PC-3 (cell line): ENCODE measurements at regions of chr3 and their contacts with region 1.

Region 1: DNA sequence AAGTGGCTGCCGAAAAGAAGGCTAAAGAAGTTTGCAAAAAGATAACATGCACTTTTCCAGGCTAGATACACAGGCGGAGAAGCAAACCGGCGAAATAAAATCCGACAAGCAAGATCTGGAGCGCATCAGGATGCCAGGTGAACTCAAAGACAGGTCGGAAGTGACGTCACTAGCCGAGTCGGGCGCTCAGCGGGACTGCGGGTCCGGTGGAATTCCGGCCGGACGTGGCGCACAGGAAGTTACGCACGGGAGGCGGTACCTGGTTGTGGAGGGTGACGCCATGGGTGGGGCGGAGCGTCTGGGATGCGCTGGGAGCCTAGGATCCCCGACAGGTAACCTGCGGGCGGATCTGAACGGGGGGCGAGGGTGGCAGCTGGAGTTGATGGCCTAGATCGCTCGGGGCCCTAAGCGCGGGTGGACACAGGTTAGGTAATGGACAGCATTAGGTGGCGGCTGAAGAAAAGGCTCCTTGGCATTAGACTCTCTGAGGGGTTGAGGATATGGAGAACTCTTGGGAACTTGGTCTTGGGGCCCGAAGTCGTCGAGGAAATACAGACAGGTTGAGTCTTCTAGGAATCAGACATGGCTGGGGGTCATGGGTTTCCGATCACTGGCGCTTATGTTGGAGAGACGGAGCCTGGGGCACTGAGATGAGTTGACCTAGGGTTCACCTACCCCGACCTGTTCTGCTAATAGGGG is 29.0 kb upstream of the EHHADH start:
- DNase-seq: peak; percentile 98
- ATAC-seq: peak; percentile 99
- H3K4me3 ChIP-seq: peak overlapping the region; percentile 84
- H3K27ac ChIP-seq: peak overlapping the region; percentile 32
- H3K4me1 ChIP-seq: peaks cover 24% of the 10 kb centered on the region
- H3K27me3 ChIP-seq: no peaks in the 10 kb centered on the region
- CTCF ChIP-seq: no peak

Region 2: DNA sequence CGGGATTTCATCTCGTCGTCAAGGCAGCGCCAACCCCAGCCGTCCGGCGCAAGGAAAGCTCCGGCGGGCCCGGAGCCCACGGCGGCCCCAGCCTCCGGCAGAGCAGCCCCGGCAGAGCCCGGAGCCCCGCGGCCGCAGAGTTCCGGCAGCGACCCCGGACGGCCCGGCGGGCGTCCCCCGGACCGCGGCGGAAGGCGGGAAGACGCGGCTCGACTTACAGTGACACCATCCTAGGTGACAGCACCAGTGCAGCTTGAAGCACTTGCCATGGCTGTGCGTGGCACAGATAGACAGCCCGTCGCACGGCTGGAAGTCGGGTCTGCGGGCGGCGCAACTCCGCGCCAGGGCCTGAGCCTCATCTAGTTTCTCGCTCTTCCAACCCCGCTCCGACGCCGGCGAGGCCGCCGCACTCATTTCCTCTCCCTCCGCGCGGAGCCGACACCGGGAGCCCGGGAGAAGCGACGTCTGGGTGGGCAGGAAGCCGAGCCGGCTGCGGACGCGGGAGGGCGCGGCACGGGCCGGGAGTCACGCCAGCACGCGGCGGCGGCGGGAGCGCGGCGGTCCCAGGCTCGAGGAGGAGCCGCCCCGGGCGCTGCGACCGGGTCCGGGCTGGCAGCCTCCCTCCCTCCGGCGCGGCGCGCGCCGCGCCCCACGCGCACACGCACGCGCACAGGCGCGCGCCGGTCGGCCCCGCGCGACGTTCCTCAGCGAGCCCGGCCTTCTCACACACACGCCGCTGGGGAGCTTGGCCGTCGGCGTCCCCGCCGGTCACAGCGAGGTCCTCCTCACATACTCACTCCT is 130.2 kb before region 1 on chr3 and contains the start of gene C3orf70:
- CTCF ChIA-PET with region 1: no interaction called
- POLR2A ChIA-PET with region 1: no interaction called
- intact Hi-C with region 1: no loop called
- DNase-seq: peak; percentile 15
- ATAC-seq: peak; percentile 57
- H3K4me3 ChIP-seq: peak within 1 kb of the TSS; percentile 56
- H3K27ac ChIP-seq: no peak within 1 kb of the TSS
- H3K4me1 ChIP-seq: no peaks in the 10 kb centered on the region
- H3K27me3 ChIP-seq: peaks cover 93% of the 10 kb centered on the region
- CTCF ChIP-seq: no peak
- total RNA-seq, gene C3orf70: not detected in 2 replicates

Region 3: GRCh38 chr3:185316738-185317407 is 34.0 kb after region 1 on chr3:
- CTCF ChIA-PET with region 1: no interaction called
- POLR2A ChIA-PET with region 1: no interaction called
- intact Hi-C with region 1: no loop called
- DNase-seq: peak; percentile 62
- ATAC-seq: peak; percentile 4; the same call in 1 of the 2 replicates
- H3K4me3 ChIP-seq: peak overlapping the region; percentile 43
- H3K27ac ChIP-seq: peak overlapping the region; percentile 75
- H3K4me1 ChIP-seq: peaks cover 22% of the 10 kb centered on the region
- H3K27me3 ChIP-seq: no peaks in the 10 kb centered on the region
- CTCF ChIP-seq: no peak

Region 4: DNA sequence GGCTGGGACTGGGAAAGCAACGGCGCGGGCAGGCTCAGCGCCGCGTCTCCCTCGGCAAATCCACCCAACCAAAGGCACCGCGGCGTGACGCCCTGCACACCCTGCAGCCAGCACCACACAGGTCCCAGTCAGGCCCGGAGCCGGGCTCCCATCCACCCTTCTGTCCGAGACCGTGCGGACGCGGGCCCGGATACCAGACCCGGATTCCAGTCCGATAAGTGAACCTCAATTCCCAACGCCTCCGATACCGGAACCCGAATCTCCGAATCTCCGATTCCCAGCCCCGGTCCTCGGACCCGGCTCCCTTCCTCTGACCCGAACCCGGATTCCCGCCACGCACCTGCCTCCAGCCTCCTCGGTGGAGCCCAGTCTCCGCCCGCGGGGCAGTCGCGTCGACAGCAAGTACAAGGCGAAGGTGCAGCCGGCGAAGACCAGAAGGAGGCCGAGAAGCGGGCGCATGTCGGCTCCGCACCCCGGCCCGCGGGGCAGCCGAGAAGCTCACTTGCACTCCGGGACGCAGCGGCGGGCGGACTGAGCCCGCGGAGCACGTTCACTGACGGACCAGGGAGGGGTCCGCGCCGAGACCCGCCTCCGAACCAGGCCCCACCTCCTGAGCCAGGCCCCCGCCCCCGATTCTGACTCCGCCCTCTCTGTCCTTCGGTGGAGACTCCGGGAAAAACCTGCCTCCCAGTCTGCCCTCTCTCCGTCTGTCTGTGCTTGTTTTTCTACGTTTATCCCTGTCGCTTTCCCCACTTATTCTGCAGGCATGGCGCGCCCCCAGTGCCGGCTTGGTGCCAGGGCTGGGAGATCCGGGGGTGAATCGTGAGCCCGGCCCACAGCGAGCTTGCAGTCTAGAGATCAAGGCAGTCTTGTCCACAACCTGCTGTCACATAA is 215.9 kb after region 1 on chr3 and contains the start of gene TMEM41A:
- CTCF ChIA-PET with region 1: no interaction called
- POLR2A ChIA-PET with region 1: no interaction called
- intact Hi-C with region 1: loop called (anchors 2 kb)
- DNase-seq: peak; percentile 93
- ATAC-seq: peak; percentile 93
- H3K4me3 ChIP-seq: peak within 1 kb of the TSS; percentile 98
- H3K27ac ChIP-seq: peak within 1 kb of the TSS; percentile 58
- H3K4me1 ChIP-seq: peaks cover 14% of the 10 kb centered on the region
- H3K27me3 ChIP-seq: no peaks in the 10 kb centered on the region
- CTCF ChIP-seq: no peak
- total RNA-seq, gene TMEM41A: 25.3 and 28.5 TPM in 2 replicates

Region 5: DNA sequence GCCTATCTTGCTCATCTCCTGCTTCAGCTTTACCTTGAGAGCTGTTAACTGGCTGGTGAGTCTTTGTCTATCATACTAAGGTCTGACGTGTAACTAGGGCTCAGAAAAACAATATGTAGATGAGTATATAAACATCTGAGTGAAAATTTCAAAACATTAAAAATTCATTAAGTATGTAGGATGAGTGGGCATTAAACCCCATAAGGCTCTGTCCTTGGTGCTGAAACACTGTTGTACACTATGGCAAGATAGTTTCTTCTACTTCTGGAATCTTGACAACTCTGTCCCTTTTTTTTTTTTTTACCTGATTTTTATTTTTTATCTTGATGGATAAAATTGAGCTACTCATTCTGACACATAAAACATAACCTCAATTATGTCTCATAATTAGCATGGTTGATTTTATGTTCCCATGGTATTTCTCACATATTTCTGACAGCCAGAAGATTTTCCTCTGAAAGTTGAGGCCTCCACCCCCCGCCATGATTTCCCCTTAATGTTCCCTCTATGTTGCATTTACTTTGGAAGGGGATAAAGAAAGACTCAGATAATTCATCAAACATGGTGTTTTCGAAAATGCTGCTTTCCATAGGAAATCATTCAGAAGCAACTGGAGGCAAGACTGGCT is 1024.9 kb after region 1 on chr3:
- CTCF ChIA-PET with region 1: no interaction called
- POLR2A ChIA-PET with region 1: no interaction called
- intact Hi-C with region 1: no loop called
- DNase-seq: peak; percentile 59
- ATAC-seq: no peak
- H3K4me3 ChIP-seq: no peak overlapping the region
- H3K27ac ChIP-seq: no peak overlapping the region
- H3K4me1 ChIP-seq: no peaks in the 10 kb centered on the region
- H3K27me3 ChIP-seq: peaks cover 35% of the 10 kb centered on the region
- CTCF ChIP-seq: no peak